ENCODE measurements at regions of chr2 and their contacts with region 1.

Region 1: GRCh38 chr2:177552422-177553175 is 160.0 kb downstream of the AGPS start:
- DNase-seq: peak; percentile 86 to 90
- ATAC-seq: peak; percentile 97 to 99 (median 98)
- H3K4me3 ChIP-seq: peak overlapping the region; percentile 67 to 93 (median 73)
- H3K27ac ChIP-seq: peak overlapping the region; percentile 85 to 99 (median 94)
- H3K4me1 ChIP-seq: peaks cover 0 to 17% (median 9%) of the 10 kb centered on the region in 9 donors
- H3K27me3 ChIP-seq: no peaks in the 10 kb centered on the region
- CTCF ChIP-seq: peak in 2 of 9 donors; percentile 7 to 14

Region 2: DNA sequence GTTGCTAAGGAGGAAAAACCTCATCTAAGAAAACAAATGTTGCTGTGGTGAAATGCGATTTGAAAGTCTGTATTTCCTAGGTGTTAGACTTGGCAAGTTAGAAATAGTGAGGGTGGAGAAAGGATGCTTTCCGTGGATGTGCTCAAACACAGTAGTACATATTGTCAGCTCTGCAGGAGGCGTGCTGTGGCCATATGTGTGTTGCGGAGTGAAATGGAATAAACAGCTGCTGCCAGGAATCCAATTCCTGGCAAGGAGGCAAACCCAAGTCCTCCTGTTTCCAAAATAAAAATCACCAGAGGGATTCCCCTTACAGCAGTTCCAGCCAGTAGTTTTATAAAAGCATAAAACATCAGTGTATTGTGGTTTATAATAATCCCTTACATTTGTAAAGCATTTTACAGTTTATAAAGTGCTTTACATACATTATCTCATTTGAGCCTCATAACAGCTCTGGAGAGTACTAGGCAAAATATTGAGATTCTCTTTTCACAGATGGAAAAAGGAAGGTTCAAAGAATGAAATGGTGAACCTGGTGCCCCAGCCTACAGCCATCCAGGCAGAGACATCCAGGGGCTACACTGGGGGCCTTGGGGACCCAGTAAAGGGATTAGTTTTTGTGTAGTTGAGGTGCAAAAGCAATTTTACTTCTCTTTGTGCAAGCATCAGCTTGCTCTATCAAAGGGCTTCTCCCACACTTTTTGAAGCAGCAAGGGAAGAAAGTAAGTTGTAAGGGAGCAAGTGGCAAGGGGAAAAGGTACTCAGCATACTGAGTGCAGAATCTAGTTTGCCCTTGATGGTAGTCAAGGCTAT is 45.9 kb after region 1 on chr2:
- intact Hi-C with region 1: loop called in 2 of 10 experiments (anchors 5 kb)
- DNase-seq: peak; percentile 22 to 52
- ATAC-seq: peak; percentile 67 to 93 (median 84)
- H3K4me3 ChIP-seq: peak overlapping the region in 2 of 10 donors; percentile 9 to 13
- H3K27ac ChIP-seq: peak overlapping the region in 7 of 10 donors; percentile 11 to 57 (median 44)
- H3K4me1 ChIP-seq: peaks cover 0 to 29% (median 22%) of the 10 kb centered on the region in 9 donors
- H3K27me3 ChIP-seq: no peaks in the 10 kb centered on the region
- CTCF ChIP-seq: peak in 3 of 9 donors; percentile 23 to 41 (median 35)

Region 3: DNA sequence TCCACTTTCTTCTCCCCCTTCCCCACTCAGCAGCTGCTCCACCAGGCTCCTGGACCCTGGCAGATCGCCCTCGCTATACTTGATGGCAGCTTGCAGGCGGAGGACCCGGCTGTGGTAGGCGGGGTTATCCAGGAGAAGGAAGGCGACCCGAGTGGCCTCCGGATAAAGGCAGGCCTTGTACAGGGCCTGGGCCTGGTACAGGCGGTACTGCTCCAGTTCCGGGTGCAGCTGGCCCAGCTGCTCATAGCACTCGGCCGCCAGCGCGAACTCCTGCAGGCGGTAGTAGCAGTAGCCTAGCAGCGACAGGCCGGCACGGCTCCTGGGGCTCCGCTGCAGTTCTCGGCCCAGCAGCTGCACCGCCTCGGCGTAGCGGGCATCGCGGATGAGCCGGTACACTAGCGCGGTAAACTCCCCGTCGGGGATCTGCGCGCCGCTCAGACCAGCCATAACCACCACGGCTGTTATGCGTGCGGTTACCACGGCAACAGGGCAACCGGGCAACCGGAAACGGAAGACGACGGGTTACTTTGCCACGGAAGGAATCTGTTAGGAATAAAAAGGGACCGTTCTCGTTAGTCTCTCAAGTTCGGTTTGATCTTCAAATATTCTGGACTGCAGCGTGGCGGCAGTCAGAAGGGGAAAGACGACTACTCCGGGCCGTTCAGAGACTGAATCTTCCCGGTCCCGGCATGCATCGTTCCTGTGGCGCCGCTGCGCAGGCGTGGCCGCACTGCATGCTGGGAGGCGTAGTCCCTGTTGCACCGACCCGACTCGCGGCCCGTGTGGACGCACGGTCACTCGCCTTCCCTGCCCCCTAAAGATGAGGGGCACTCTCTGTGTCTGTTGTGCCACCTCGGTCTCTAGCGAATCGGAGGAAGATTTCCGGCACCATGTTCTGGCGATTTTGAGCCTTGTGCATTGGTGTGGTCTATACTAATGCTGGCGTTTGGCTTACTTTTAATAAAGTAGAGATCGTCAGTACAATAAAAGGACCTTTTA is 66.0 kb after region 1 on chr2:
- intact Hi-C with region 1: loop called in 3 of 10 experiments (anchors 5 kb)
- DNase-seq: peak; percentile 90 to 93
- ATAC-seq: peak; percentile 97 to 99 (median 98)
- H3K4me3 ChIP-seq: peak overlapping the region; percentile 25 to 97 (median 75)
- H3K27ac ChIP-seq: peak overlapping the region; percentile 91 to 100 (median 96)
- H3K4me1 ChIP-seq: peaks cover 3 to 33% (median 11%) of the 10 kb centered on the region in 9 donors
- H3K27me3 ChIP-seq: no peaks in the 10 kb centered on the region
- CTCF ChIP-seq: no peak

Region 4: GRCh38 chr2:177830881-177831386 is 278.3 kb after region 1 on chr2:
- intact Hi-C with region 1: no loop called
- DNase-seq: no peak
- ATAC-seq: no peak
- H3K4me3 ChIP-seq: no peak overlapping the region
- H3K27ac ChIP-seq: no peak overlapping the region
- H3K4me1 ChIP-seq: no peaks in the 10 kb centered on the region
- H3K27me3 ChIP-seq: no peaks in the 10 kb centered on the region
- CTCF ChIP-seq: no peak

Measured in heart right ventricle (tissue), 16 donors.